Right ventricle myocardium inferior (tissue), 1 donor: ENCODE measurements at regions of chr2 and their contacts with region 1.

Region 1: DNA sequence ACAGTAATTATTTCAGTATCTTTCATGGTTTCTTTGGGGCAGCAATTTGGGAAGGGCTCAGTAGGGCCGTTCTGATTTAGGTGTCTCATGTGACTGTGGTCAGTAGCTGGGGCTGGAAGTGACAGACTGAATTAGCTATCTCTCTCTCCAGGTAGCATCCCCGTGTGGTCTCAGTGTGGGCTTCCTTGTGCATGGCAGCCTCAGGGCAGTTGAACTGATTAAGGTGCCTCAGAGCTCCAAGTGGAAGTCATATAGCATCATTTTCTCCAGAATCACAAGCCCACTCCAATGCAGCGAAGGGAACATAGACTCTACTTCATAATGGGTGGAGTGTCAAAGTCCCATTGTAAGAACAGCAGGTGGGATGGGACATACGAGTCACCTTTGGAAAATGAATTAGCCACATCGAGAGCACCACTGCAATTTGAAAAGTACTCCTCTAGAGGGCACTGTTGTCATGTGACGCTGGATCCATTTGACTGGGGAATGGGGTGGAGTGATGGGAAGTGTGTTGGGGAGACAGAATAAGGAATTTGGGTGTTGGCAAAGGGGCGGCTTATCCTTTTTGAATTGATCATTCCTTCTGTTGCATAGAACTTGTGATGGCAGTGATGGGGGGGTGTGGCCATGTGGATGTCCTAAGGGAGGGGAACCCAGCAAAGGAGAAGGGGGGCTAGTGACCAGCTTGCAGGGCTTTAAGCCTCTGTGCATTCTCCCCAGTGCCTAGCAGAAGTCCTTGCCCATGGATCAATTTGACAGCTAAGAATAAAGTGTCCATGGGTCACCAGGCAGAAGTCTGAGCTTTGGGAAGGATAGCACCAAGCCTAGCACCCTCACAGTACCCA is 39.3 kb upstream of the FAM136A start:
- DNase-seq: no peak
- ATAC-seq: peak; percentile 39

Region 2: GRCh38 chr2:70310899-70311298 is 30.2 kb before region 1 on chr2:
- intact Hi-C with region 1: no loop called
- DNase-seq: no peak
- ATAC-seq: no peak

Region 3: GRCh38 chr2:70616168-70616694 is 275.1 kb after region 1 on chr2:
- intact Hi-C with region 1: loop called (anchors 1 kb)
- DNase-seq: no peak
- ATAC-seq: no peak

Region 4: DNA sequence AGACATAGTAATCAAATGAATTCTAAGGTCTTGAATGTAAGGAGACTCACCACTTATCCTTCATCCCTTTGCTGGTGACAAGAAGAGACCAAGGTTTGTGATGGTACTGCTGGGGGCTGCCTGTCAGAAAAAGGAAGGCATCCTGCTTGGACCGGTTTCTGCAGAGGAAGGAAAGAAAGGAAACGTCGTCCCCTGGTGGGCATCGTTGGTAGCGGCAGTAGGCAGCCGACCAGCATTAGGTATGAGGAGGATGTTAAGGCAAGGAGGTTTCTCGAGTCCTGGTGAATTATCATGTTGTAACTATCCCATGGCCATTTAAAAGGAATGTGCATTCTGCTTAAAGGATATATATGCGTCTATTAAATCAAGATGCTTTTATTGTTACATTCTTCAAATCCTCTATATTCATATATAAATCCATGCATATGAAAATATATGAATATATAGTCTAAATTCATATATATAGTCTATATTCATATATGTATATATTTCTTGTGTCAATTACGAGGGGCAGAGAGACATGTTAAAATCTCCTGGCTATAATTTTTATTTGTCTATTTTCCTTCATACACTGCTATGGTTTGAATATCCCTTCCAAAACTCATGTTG is 306.8 kb after region 1 on chr2:
- intact Hi-C with region 1: loop called (anchors 10 kb)
- DNase-seq: no peak
- ATAC-seq: peak; percentile 48